GM13977 (cell line): ENCODE measurements at regions of chr3 and their contacts with region 1.

Region 1: GRCh38 chr3:129650256-129650872 is 43.9 kb upstream of the PLXND1 start:
- DNase-seq: peak; percentile 56
- CTCF ChIP-seq: peak; percentile 76

Region 2: GRCh38 chr3:129824926-129825541 is 174.7 kb after region 1 on chr3:
- in situ Hi-C with region 1: loop called (anchors 5 kb)
- DNase-seq: peak; percentile 37
- CTCF ChIP-seq: peak; percentile 62